Activated naive CD4-positive, alpha-beta T cell treated with anti-CD3 and anti-CD28 coated beads for 36 hours (primary cell): ENCODE measurements at regions of chr2 and their contacts with region 1.

Region 1: GRCh38 chr2:127081826-127082633 is 24.9 kb downstream of the BIN1 start:
- DNase-seq: peak; percentile 86
- H3K4me3 Mint-ChIP-seq: peak overlapping the region; percentile 82
- H3K27ac Mint-ChIP-seq: peak overlapping the region; percentile 91
- H3K4me1 Mint-ChIP-seq: peaks cover 74% of the 10 kb centered on the region
- H3K27me3 Mint-ChIP-seq: no peaks in the 10 kb centered on the region

Region 2: DNA sequence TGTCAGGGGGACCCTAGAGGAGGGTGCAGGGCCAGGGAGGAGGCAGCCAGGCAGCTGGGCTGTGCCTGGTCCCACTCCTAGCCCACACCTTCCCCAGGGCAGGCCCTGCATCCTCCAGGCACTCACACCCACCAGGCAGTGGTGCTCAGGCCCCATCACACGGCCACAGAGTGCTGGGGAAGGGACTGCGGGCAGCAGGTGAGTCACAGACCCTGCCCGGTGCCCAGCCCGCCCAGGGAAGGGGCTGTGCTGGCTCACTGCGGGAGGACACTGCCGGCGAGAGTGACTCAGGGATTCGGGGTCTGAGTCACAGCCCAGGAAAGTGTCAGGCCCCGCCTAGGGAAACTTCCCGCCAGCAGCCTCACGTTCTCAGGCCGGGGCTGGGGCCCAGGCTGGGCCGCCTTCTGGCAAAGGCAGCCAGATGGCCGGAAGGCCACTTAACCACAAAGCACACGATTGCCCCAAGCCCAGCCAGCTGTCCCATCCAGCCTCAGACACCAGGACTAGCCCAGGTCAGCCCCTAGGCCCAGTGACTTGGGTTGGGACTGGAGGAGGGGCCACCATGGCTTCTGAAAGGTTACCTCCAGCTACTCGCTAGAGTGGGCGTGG is 17.3 kb before region 1 on chr2:
- CTCF ChIA-PET with region 1: interaction called, 47 read pairs
- intact Hi-C with region 1: loop called (anchors 1 kb)
- DNase-seq: peak; percentile 85
- H3K4me3 Mint-ChIP-seq: no peak overlapping the region
- H3K27ac Mint-ChIP-seq: peak overlapping the region; percentile 75
- H3K4me1 Mint-ChIP-seq: peaks cover 26% of the 10 kb centered on the region
- H3K27me3 Mint-ChIP-seq: no peaks in the 10 kb centered on the region

Region 3: DNA sequence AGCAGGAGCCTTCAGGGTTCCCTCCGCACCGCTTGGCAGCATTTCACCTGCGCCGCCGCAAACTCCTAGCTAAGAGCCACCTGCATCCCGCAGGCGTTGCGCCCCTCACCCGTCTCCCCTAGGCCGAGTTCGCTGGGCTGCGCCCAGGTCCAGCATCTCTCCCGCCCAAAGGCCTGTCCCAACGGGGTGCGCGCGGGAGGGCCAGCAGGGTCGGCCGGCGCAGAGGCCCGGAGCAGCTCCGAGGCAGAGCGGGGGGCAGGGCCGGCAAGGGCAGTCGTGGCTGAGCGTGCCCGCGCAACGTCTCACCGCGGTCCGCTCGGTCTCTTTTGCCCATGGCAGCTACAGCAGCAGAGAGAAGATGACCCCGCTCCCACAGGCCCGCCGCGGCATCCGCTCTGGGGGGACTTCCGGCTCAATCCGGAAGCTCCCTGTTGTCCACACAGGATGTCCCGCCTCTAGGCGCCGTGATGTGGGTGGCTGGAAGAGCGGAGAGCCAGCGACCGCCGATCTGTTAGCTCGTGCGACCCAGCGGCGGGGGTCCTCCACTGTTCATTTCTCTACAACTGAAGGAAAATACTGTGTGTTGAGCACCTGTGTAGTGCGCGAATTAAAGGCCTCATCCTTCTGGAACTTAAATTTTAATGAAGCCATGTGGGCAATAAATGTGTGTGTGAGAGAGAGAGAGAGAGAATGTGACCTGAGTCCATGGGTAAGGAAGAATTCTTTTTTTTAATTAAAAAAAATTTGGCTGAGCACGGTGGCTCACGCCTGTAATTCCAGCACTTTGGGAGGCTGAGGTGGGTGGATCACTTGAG is 211.9 kb after region 1 on chr2 and contains the start of gene ERCC3:
- CTCF ChIA-PET with region 1: no interaction called
- intact Hi-C with region 1: loop called (anchors 2 kb)
- DNase-seq: peak; percentile 88
- H3K4me3 Mint-ChIP-seq: peak within 1 kb of the TSS; percentile 99
- H3K27ac Mint-ChIP-seq: peak within 1 kb of the TSS; percentile 95
- H3K4me1 Mint-ChIP-seq: peaks cover 25% of the 10 kb centered on the region
- H3K27me3 Mint-ChIP-seq: no peaks in the 10 kb centered on the region
- total RNA-seq, gene ERCC3: 37.0 to 41.1 TPM

Region 4: GRCh38 chr2:127379712-127380355 is 297.8 kb after region 1 on chr2:
- CTCF ChIA-PET with region 1: no interaction called
- intact Hi-C with region 1: no loop called
- DNase-seq: no peak
- H3K4me3 Mint-ChIP-seq: no peak overlapping the region
- H3K27ac Mint-ChIP-seq: no peak overlapping the region
- H3K4me1 Mint-ChIP-seq: peaks cover 60% of the 10 kb centered on the region
- H3K27me3 Mint-ChIP-seq: no peaks in the 10 kb centered on the region

Region 5: DNA sequence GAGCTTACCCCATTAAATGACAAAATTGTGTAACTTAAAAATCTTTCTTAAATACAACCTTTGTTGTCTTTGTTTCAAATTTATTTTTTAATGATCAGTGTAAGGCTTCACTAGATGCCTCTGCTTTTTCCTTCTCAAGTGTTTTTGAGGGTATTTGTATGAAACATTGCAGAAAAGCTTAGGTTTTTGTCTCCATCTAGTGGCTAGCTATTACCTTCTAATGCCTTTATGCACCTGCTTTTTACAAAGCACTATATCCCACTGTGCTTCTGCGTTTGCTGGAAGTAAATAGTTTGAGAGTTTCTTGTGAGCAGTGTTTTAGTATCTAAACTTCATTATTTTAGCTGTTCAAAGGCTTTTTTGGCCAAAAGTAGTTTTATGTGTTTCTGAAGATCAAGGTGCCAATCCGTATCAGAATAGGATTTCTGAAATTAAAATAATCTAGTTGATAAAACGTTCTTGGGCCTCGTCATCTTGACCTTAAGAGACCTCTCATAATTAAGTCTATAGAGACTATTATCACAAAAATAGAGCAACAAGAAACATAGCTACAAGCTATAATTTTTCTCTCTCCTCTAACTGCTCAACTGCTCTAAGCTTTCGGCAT is 397.3 kb after region 1 on chr2:
- CTCF ChIA-PET with region 1: interaction called, 3 read pairs
- intact Hi-C with region 1: loop called (anchors 5 kb)
- DNase-seq: no peak
- H3K4me3 Mint-ChIP-seq: no peak overlapping the region
- H3K27ac Mint-ChIP-seq: no peak overlapping the region
- H3K4me1 Mint-ChIP-seq: no peaks in the 10 kb centered on the region
- H3K27me3 Mint-ChIP-seq: no peaks in the 10 kb centered on the region

Region 6: DNA sequence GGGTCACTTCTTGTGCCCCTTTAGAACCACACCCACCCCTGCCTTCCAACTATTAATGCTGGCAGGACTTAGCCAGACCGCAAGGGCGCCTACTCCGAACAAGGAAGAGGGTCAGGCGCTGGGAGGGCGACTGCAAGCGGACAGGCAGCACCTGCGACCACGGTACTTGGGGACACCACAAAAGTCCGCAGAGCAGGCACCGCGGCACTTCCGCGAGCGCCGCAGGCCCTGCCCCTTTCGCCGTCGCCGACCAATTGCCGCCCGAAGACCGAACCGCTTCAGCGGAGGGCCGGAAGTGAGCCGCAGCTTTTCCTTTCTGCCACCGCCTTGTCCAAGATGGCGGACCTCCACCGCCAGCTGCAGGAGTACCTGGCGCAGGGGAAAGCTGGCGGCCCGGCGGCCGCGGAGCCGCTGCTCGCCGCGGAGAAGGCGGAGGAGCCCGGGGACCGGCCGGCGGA is 619.2 kb after region 1 on chr2 and contains the start of gene SFT2D3:
- CTCF ChIA-PET with region 1: no interaction called
- intact Hi-C with region 1: loop called (anchors 5 kb)
- DNase-seq: peak; percentile 94
- H3K4me3 Mint-ChIP-seq: peak within 1 kb of the TSS; percentile 88
- H3K27ac Mint-ChIP-seq: peak within 1 kb of the TSS; percentile 95
- H3K4me1 Mint-ChIP-seq: peaks cover 38% of the 10 kb centered on the region
- H3K27me3 Mint-ChIP-seq: no peaks in the 10 kb centered on the region
- total RNA-seq, gene SFT2D3: 3.1 to 3.3 TPM